ENCODE measurements at regions of chr7 and their contacts with region 1.

Region 1: GRCh38 chr7:100896732-100897608 is 1.3 kb upstream of the ACHE start:
- DNase-seq: no peak
- ATAC-seq: peak; percentile 61
- H3K4me3 ChIP-seq: peak overlapping the region in 1 of 2 experiments; percentile 56; a peak in 1 of 4 replicates
- H3K27ac ChIP-seq: no peak overlapping the region
- H3K4me1 ChIP-seq: peaks cover 6 to 31% of the 10 kb centered on the region in 2 experiments
- H3K27me3 ChIP-seq: no peaks in the 10 kb centered on the region; the same call in 1 of the 2 replicates
- CTCF ChIP-seq: peak in 2 of 3 experiments; percentile 74 to 82; a peak in 4 of 6 replicates
- POLR2A ChIP-seq: no peak
- RAD21 ChIP-seq: no peak

Region 2: DNA sequence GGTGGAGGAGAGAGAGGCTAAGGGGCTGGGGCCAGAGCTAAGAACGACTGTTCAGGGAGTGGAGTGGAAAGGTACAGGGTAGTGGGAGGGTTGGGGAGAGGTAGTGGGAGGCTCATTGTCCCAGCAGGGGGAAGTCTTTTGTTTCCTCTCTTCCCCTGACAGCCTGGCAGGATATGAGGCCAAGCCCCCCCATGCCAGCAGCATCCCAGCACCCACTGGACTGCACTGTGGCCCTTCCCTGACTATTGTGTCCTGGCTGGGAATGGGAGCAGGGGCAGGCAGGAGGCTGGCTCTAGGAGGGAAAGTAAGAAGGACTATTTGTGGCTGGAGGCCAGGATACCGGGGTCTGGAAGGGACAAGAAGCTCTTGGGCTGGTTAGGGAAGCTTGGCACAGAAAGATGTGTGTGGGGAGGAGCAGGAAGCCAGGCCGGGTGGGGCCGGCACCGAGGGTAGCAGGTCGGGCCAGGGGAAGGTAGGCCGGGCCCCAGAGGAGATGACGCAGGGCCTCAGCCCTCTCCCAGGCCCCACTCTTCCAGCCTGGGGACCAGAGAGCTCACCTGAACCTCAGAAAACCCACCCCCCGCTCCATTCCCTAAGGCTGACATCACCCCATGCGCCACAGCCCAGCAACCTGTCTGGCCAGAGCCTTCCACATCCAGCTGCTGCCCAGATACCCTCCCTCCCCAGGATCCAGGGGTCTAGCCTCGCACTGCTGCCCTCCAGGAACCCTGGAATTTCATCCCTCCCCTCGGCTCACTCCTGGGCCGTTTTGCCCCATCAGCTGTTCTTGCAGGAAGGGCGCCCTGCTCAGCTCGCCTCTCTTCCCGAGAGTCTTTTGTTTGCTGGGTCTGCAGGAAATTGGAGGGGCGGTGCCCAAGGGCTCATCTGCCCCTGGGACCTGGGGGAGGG is 60.8 kb before region 1 on chr7:
- CTCF ChIA-PET with region 1: no interaction called
- POLR2A ChIA-PET with region 1: no interaction called
- RAD21 ChIA-PET with region 1: no interaction called
- intact Hi-C with region 1: no loop called
- DNase-seq: no peak
- ATAC-seq: no peak
- H3K4me3 ChIP-seq: no peak overlapping the region
- H3K27ac ChIP-seq: peak overlapping the region; percentile 18; the same call in 1 of the 2 replicates
- H3K4me1 ChIP-seq: peaks cover 10 to 19% of the 10 kb centered on the region in 2 experiments
- H3K27me3 ChIP-seq: no peaks in the 10 kb centered on the region
- CTCF ChIP-seq: no peak
- POLR2A ChIP-seq: no peak
- RAD21 ChIP-seq: no peak

Region 3: GRCh38 chr7:101059627-101059942 is 162.6 kb after region 1 on chr7:
- CTCF ChIA-PET with region 1: interaction called, 4 read pairs
- POLR2A ChIA-PET with region 1: no interaction called
- RAD21 ChIA-PET with region 1: no interaction called
- intact Hi-C with region 1: loop called (anchors 1 kb)
- DNase-seq: no peak
- ATAC-seq: peak; percentile 22; the same call in 1 of the 2 replicates
- H3K4me3 ChIP-seq: no peak overlapping the region
- H3K27ac ChIP-seq: no peak overlapping the region
- H3K4me1 ChIP-seq: no peaks in the 10 kb centered on the region; a peak in 1 of 4 replicates
- H3K27me3 ChIP-seq: peaks cover 30% of the 10 kb centered on the region
- CTCF ChIP-seq: no peak
- POLR2A ChIP-seq: no peak
- RAD21 ChIP-seq: no peak

Region 4: DNA sequence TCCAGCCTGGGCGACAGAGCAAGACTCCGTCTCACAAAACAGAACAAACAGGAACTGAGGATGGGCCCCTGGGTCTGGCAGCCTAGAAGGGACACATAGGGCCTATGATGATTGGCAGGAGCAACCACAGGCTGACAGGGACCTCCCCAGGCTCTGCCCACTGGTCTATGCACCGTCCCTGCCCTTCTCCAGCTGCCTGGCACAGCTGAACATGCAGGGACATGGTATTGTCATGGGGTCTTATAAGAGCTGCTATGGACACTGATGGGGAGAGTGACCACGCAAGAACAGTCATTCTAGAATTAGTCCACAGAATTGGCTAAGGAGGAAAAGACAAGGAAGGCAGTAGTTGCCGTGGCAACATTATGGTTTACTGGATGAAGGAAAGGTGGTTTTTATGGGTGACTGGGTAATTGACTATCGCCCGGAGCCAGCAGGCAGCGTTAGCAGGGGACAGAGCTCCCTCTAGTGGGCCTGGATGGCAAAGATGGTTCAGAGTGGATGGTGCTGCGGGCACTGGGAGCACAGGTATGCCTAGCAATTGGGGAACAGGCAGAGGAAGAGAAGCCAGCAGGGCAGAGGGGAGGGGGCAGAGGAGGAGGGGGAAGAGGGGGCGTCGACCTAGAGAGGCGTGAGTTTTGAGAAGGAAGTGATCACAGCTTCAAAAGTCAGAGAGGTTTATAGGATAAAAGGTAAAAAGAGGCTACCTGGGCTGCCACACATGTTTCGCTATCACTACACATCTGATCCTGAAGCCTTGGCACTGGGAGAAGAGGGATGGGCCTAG is 180.5 kb after region 1 on chr7:
- CTCF ChIA-PET with region 1: interaction called, 4 read pairs
- POLR2A ChIA-PET with region 1: no interaction called
- RAD21 ChIA-PET with region 1: no interaction called
- intact Hi-C with region 1: loop called (anchors 1 kb)
- DNase-seq: peak; percentile 68
- ATAC-seq: peak; percentile 98
- H3K4me3 ChIP-seq: no peak overlapping the region
- H3K27ac ChIP-seq: no peak overlapping the region
- H3K4me1 ChIP-seq: peaks cover 0 to 10% of the 10 kb centered on the region in 2 experiments; a peak in 2 of 4 replicates
- H3K27me3 ChIP-seq: no peaks in the 10 kb centered on the region
- CTCF ChIP-seq: peak; percentile 88 to 96 (median 95)
- POLR2A ChIP-seq: no peak
- RAD21 ChIP-seq: peak; percentile 94